Aorta (tissue), 5 donors: ENCODE measurements at regions of chr2 and their contacts with region 1.

Region 1: DNA sequence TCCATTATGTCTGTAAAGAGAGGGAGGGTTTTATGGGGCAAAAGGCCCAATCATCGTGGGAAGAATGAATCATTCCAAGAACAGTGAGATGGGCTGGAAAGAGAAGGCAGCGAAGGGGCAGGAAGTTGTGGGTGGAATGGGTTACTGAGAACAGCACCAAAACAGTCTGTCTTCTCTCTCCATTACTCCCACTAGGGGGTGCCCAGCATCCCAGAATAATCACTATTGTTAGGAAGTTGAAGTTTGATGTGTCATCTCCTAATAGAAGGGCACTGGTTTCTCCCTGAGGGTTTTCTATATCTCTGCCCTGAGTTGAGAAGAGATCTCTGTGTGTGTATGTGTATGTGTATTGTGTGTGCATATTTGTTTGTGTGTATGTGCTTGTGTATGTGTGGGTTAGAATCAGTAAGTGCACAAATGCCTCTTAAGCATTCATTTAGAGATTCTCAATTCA is 76.6 kb upstream of the MAP4K3 start:
- DNase-seq: peak; percentile 66 to 76
- ATAC-seq: peak; percentile 80
- H3K4me3 ChIP-seq: no peak overlapping the region
- H3K27ac ChIP-seq: no peak overlapping the region
- H3K4me1 ChIP-seq: no peaks in the 10 kb centered on the region
- H3K27me3 ChIP-seq: no peaks in the 10 kb centered on the region

Region 2: GRCh38 chr2:39568561-39569006 is 54.9 kb after region 1 on chr2:
- intact Hi-C with region 1: loop called (anchors 2 to 5 kb)
- DNase-seq: no peak
- ATAC-seq: peak; percentile 69
- H3K4me3 ChIP-seq: no peak overlapping the region
- H3K27ac ChIP-seq: peak overlapping the region; percentile 82 to 86
- H3K4me1 ChIP-seq: peaks cover 6 to 8% of the 10 kb centered on the region in 2 donors
- H3K27me3 ChIP-seq: no peaks in the 10 kb centered on the region

Region 3: GRCh38 chr2:39696838-39697237 is 183.2 kb after region 1 on chr2:
- intact Hi-C with region 1: loop called (anchors 5 to 10 kb)
- DNase-seq: no peak
- ATAC-seq: peak; percentile 60
- H3K4me3 ChIP-seq: no peak overlapping the region
- H3K27ac ChIP-seq: peak overlapping the region in 1 of 2 donors; percentile 30
- H3K4me1 ChIP-seq: no peaks in the 10 kb centered on the region
- H3K27me3 ChIP-seq: no peaks in the 10 kb centered on the region